ENCODE measurements at regions of chr4 and their contacts with region 1.

Region 1: DNA sequence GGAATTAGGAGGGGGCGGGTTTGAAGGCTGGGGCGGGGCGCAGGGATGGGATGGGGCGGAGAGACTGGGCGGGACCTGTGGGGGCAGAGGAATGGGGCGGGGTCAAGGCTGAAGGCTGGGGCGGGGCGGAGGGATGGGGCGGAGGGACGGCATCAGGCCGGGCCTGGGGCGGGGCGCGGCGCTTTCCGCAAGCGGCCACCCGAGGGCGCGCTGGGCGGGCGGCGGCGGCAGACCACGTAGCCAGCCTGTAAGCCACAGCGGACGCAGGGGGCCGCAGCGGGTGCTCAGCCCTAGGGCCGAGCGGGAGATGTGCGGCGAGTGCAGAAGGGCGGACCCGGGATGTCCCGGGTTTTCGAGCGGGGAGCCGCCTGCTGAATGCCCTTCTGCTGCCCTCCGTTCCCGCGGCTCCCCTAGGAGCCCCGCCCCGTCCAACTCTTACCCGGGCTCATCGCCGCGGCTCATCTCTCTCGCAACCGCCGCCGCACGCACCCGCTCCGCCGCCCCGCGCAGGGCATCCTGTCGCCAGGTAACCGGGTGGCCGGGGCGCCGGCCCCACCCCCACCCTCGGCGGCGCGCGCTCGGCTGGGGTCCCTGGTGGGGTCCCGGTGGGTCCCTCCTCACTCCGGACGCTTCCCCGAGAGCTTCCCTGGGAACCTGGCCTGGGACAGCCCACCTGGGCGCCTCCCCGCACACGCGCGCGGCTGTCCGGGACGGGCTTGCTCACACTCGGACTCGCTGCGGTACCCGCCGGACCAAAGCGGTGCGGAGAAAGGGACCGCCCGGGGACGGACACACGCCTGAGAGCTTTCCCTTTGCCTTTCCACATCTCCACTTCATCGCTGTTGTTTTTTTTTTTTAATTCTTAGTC is at the start of gene CCDC110:
- DNase-seq: peak; percentile 94
- ATAC-seq: peak; percentile 97
- total RNA-seq, gene CCDC110: 1.6 TPM

Region 2: DNA sequence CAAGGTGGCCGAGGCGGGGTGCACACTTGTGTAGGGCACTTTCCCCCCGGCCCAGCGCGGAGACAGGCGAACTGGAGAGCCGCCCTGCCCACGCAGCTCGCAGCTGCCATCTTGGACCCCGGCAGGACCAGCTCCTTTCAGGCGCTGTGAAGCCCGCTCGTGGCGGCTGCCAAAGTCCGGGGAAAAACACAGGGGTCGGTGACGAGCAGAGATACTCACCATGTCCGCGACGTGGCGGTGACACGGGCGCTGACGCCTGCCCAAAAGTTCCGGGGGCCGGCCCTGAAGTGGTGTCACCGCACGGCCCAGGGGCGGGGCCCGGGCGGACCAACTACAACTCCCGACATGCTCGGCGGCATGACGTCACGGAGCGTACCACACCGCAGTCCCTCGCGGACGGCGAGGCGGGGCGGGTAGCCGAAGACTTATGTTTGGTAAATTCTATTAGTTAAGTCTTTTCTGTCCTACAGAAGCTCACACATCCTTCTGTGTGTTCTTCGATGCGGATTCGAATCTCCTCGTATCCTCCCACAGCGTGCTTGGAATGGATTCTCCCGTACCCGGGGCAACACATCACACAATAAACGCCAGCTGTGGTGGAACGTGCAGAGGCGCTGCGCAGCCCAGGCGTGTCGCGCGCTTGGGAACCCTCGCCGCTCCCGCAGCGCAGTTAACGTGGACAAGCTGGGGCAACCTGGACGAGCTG is 45.7 kb before region 1 on chr4 and contains the start of gene UFSP2:
- intact Hi-C with region 1: loop called (anchors 2 kb)
- DNase-seq: peak; percentile 94
- ATAC-seq: peak; percentile 98
- total RNA-seq, gene UFSP2: 49.4 TPM

Region 3: DNA sequence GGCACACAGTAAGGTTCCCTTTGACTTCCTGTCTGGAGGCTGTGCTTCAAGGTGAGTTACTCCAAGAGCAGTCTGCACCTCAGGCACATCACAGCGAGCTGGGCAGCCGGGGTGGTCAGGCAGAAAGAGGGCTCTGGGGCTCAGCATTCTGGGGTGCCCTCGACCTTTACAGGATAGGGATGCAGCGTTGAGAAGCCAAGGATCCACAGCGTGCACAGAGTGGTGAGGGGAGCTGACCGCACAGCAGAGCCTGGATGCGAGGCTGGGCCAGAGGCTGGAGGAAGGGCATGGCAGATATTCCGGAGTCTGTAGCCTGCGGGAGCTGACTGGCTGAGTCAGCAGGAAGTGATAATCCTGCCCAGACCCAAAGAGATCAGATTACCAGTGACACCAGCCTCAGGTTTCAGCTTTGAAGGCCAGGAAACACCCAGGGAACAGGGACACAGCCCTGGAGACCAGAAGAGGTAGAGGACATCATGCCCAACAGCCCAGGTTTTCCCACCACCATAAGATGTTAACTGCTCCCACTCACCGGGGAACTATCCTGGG is 102.3 kb after region 1 on chr4:
- intact Hi-C with region 1: no loop called
- DNase-seq: no peak
- ATAC-seq: peak; percentile 28

Region 4: DNA sequence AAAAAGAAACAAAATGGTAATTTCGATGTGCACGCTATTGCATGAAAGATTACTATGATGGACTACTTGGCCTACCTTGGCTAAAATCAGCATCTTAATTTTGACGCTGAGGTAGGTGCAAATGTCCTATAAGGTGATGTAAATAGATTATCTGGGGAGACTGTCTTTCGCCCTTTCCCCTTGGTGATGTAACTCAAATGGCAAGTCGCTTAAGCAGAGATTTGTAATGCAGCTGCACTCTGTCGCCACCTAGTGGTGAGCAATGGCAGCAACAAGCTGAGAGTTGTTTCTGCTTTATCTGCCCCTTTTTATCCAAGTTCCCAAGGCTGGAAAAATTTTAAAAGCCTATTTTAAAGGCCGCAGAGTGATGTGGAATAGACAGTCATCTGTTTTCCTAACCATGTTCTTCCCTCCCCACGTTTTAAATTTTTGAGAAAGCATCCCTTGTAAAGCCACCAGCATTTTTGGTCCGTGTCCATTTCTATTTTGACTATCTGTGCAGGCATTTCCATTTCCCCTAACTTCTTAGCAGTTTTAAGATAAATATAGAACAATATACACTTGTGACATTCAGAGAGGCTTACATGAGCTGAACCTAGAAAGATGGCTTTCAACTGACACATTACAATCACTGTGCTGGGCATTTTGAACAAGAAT is 126.2 kb after region 1 on chr4:
- intact Hi-C with region 1: loop called (anchors 5 kb)
- DNase-seq: peak; percentile 79
- ATAC-seq: peak; percentile 76

Region 5: GRCh38 chr4:186037692-186038658 is 566.5 kb after region 1 on chr4:
- intact Hi-C with region 1: loop called (anchors 10 kb)
- DNase-seq: no peak
- ATAC-seq: peak; percentile 91

Measured in Right ventricle myocardium superior (tissue), 1 donor.